Calu3 (cell line): ENCODE measurements at regions of chr2 and their contacts with region 1.

Region 1: GRCh38 chr2:178761759-178762371 is 45.4 kb downstream of the TTN start:
- DNase-seq: peak; percentile 51
- H3K4me3 Mint-ChIP-seq: no peak overlapping the region
- H3K27ac Mint-ChIP-seq: no peak overlapping the region
- H3K4me1 Mint-ChIP-seq: no peaks in the 10 kb centered on the region
- H3K27me3 Mint-ChIP-seq: no peaks in the 10 kb centered on the region
- CTCF ChIP-seq: peak; percentile 72

Region 2: GRCh38 chr2:178542569-178542968 is 219.3 kb before region 1 on chr2:
- CTCF ChIA-PET with region 1: no interaction called
- intact Hi-C with region 1: no loop called
- DNase-seq: no peak
- H3K4me3 Mint-ChIP-seq: no peak overlapping the region
- H3K27ac Mint-ChIP-seq: no peak overlapping the region
- H3K4me1 Mint-ChIP-seq: no peaks in the 10 kb centered on the region
- H3K27me3 Mint-ChIP-seq: no peaks in the 10 kb centered on the region
- CTCF ChIP-seq: no peak

Region 3: GRCh38 chr2:178882666-178883440 is 121.0 kb after region 1 on chr2:
- CTCF ChIA-PET with region 1: no interaction called
- intact Hi-C with region 1: no loop called
- DNase-seq: no peak
- H3K4me3 Mint-ChIP-seq: no peak overlapping the region
- H3K27ac Mint-ChIP-seq: no peak overlapping the region
- H3K4me1 Mint-ChIP-seq: peaks cover 5% of the 10 kb centered on the region
- H3K27me3 Mint-ChIP-seq: no peaks in the 10 kb centered on the region
- CTCF ChIP-seq: no peak

Region 4: GRCh38 chr2:178914259-178914849 is 152.5 kb after region 1 on chr2:
- CTCF ChIA-PET with region 1: interaction called, 5 read pairs
- intact Hi-C with region 1: loop called (anchors 1 kb)
- DNase-seq: peak; percentile 83
- H3K4me3 Mint-ChIP-seq: no peak overlapping the region
- H3K27ac Mint-ChIP-seq: no peak overlapping the region
- H3K4me1 Mint-ChIP-seq: peaks cover 7% of the 10 kb centered on the region
- H3K27me3 Mint-ChIP-seq: no peaks in the 10 kb centered on the region
- CTCF ChIP-seq: peak; percentile 83

Region 5: DNA sequence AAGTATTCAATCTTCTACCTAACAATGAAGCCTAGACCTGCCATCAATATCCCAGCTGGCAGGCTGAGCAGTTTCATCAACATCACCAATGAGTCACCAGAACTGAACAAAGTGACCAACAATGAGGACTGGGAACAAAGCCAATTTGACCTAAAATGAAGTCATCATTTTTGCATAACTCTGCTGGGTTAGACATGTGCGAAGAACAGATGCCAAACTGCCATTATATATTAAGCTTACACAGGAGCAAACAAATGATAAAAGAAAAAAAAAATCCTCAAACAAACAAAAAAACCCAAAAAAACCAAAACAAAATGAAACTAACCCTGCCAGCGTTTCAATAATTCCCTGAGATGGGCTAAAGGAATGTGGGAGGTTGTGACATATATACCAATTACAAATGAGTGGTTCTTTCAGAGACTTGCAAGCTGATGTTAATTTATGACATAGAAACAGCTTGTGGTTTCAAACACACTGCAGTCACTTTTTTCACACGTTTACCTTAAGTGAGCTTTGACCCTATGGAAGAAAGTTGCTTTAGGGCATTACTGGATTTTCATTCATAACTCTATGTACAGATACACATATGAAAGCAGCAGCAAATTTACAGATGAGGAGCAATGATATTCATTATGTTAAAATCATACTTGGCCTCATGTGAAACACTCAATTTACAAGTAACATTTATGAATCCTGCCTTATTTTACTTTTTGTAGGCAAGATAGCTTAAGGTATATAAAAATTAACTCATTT is 345.0 kb after region 1 on chr2:
- CTCF ChIA-PET with region 1: no interaction called
- intact Hi-C with region 1: loop called (anchors 10 kb)
- DNase-seq: peak; percentile 70
- H3K4me3 Mint-ChIP-seq: peak overlapping the region; percentile 19
- H3K27ac Mint-ChIP-seq: peak overlapping the region; percentile 56
- H3K4me1 Mint-ChIP-seq: peaks cover 41% of the 10 kb centered on the region
- H3K27me3 Mint-ChIP-seq: no peaks in the 10 kb centered on the region
- CTCF ChIP-seq: no peak